PC-3 (cell line): ENCODE measurements at regions of chr3 and their contacts with region 1.

Region 1: GRCh38 chr3:134299185-134299887 is 48.7 kb upstream of the RYK start:
- DNase-seq: peak; percentile 43
- ATAC-seq: peak; percentile 74
- H3K4me3 ChIP-seq: no peak overlapping the region
- H3K27ac ChIP-seq: no peak overlapping the region
- H3K4me1 ChIP-seq: no peaks in the 10 kb centered on the region
- H3K27me3 ChIP-seq: no peaks in the 10 kb centered on the region
- CTCF ChIP-seq: peak; percentile 35; the same call in 1 of the 2 replicates

Region 2: GRCh38 chr3:134250717-134251220 is 48.6 kb before region 1 on chr3 and contains the start of gene RYK:
- CTCF ChIA-PET with region 1: no interaction called
- POLR2A ChIA-PET with region 1: no interaction called
- intact Hi-C with region 1: loop called (anchors 5 kb)
- DNase-seq: peak; percentile 81
- ATAC-seq: peak; percentile 81
- H3K4me3 ChIP-seq: peak within 1 kb of the TSS; percentile 96
- H3K27ac ChIP-seq: peak within 1 kb of the TSS; percentile 36; the same call in 1 of the 2 replicates
- H3K4me1 ChIP-seq: peaks cover 6% of the 10 kb centered on the region; the same call in 1 of the 2 replicates
- H3K27me3 ChIP-seq: no peaks in the 10 kb centered on the region
- CTCF ChIP-seq: no peak
- total RNA-seq, gene RYK: 44.1 and 47.2 TPM in 2 replicates